Natural killer cell (primary cell): ENCODE measurements at regions of chr2 and their contacts with region 1.

Region 1: DNA sequence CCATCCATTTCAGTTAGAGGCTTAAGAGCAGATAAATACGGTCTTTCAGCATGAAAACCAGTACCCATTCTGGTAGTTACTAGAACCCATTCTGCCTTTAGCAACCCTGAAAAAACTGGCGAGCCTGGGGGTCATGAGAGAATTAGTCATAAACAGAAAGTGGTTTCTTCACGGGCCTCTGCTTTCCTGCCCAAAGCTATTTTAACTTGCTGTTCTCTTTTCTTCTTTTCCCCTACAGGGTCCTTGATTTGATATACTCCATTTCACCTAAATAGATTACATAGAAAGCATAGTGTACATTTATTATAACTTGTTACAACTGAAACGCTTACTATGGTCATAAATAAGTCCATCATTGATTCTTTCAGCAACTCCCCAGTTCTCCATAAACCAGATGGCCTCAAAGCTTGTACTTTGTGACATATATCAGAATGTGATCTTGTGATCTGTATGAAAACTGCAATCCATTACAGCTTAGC is 48.3 kb downstream of the WDFY1 start:
- DNase-seq: peak in 1 of 2 donors; percentile 12
- ATAC-seq: peak; percentile 43 to 77 (median 56)
- H3K4me3 ChIP-seq: no peak overlapping the region
- H3K4me3 Mint-ChIP-seq: no peak overlapping the region
- H3K27ac ChIP-seq: peak overlapping the region; percentile 81
- H3K27ac Mint-ChIP-seq: peak overlapping the region; percentile 51 to 91
- H3K4me1 ChIP-seq: no peaks in the 10 kb centered on the region
- H3K4me1 Mint-ChIP-seq: peaks cover 21 to 23% of the 10 kb centered on the region in 2 donors
- H3K27me3 ChIP-seq: no peaks in the 10 kb centered on the region
- H3K27me3 Mint-ChIP-seq: no peaks in the 10 kb centered on the region
- CTCF ChIP-seq: no peak

Region 2: DNA sequence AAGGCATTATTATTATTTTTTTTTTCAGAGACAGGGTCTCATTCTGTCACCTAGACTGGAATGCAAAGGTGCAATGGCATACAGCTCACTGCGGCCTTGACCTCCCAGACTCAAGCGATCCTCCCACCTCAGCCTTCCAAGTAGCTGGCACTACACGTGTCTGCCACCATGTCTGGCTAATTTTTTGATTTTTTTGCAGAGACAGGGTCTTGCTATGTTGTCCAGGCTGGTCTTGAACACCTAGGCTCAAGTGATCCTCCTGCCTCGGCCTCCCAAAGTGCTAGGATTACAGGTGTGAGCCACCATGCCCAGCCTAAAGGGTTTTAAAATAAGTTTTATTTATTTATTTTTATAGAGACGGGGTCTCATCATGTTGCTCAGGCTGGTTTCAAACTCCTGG is 14.2 kb before region 1 on chr2:
- intact Hi-C with region 1: loop called (anchors 2 kb)
- DNase-seq: no peak
- ATAC-seq: no peak
- H3K4me3 ChIP-seq: no peak overlapping the region
- H3K4me3 Mint-ChIP-seq: no peak overlapping the region
- H3K27ac ChIP-seq: no peak overlapping the region
- H3K27ac Mint-ChIP-seq: peak overlapping the region in 1 of 2 donors; percentile 58
- H3K4me1 ChIP-seq: no peaks in the 10 kb centered on the region
- H3K4me1 Mint-ChIP-seq: no peaks in the 10 kb centered on the region
- H3K27me3 ChIP-seq: no peaks in the 10 kb centered on the region
- H3K27me3 Mint-ChIP-seq: no peaks in the 10 kb centered on the region
- CTCF ChIP-seq: no peak